Calu3 (cell line): ENCODE measurements at regions of chr2 and their contacts with region 1.

Region 1: GRCh38 chr2:20097879-20098714 is 46.7 kb upstream of the LAPTM4A start:
- DNase-seq: peak; percentile 81
- H3K4me3 Mint-ChIP-seq: no peak overlapping the region
- H3K27ac Mint-ChIP-seq: no peak overlapping the region
- H3K4me1 Mint-ChIP-seq: peaks cover 8% of the 10 kb centered on the region
- H3K27me3 Mint-ChIP-seq: no peaks in the 10 kb centered on the region
- CTCF ChIP-seq: peak; percentile 70

Region 2: DNA sequence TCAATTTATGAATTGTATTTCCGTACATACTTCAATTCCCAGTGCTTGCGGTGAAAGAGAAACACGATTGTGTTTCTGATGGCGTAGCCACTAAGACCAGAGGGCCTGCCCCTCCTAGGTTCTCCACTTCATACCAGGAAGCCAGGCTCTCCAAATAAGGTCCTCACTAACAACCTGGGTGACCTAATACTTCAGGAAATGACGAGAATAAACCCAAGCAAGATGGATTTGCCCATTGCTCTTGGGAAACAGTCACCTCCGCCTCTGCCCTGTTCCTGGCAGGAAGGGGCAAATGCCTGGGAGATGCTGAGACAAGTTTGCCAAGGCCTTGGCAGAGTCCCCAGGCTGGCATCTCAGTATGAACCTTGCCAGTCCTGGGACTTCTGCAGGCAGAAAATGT is 238.1 kb before region 1 on chr2:
- CTCF ChIA-PET with region 1: no interaction called
- intact Hi-C with region 1: no loop called
- DNase-seq: no peak
- H3K4me3 Mint-ChIP-seq: no peak overlapping the region
- H3K27ac Mint-ChIP-seq: no peak overlapping the region
- H3K4me1 Mint-ChIP-seq: no peaks in the 10 kb centered on the region
- H3K27me3 Mint-ChIP-seq: peaks cover 15% of the 10 kb centered on the region
- CTCF ChIP-seq: no peak

Region 3: DNA sequence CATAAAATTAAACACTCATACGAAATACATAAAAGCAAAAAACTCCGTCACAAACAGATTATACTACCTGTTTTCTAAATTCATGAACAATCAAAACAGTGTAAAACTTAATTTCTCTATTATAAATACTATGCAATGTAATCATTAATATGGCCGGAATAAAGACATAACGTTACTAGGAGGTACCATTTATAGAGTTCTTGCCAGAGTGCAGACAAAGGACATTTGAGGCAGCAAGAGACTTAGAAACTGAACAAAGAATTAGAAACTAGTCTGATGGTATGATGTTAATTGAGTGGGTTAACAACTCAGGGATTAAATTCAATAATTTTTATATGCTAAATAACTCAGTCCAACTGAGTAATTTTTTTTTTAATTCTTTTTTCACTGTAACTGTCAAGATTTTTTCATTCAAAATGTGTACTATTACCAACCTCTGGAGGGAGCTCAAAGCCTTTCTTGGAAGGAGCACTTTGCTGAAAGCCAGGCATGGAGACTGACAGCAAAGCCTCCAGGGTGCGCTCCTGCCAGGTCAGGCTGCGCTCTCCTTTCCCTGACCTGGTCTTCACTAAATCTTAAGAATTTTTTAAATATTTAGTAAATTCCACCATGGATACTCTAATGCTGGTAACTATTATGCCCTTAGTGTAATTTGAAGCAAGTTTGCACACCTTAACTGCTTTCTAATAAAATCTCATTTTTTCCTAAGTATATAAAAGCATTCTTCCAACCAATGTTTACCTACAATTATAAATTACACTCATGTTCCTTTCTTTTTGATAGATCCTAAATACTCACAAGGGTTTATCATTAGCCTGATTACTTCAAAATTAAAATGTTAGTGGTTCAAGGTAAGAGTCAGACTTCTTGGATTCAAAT is 142.3 kb before region 1 on chr2:
- CTCF ChIA-PET with region 1: interaction called, 15 read pairs
- intact Hi-C with region 1: loop called (anchors 1 kb)
- DNase-seq: peak; percentile 74
- H3K4me3 Mint-ChIP-seq: no peak overlapping the region
- H3K27ac Mint-ChIP-seq: no peak overlapping the region
- H3K4me1 Mint-ChIP-seq: no peaks in the 10 kb centered on the region
- H3K27me3 Mint-ChIP-seq: no peaks in the 10 kb centered on the region
- CTCF ChIP-seq: peak; percentile 81

Region 4: GRCh38 chr2:20015472-20016083 is 82.5 kb before region 1 on chr2:
- CTCF ChIA-PET with region 1: interaction called, 37 read pairs
- intact Hi-C with region 1: loop called (anchors 1 kb)
- DNase-seq: peak; percentile 47
- H3K4me3 Mint-ChIP-seq: no peak overlapping the region
- H3K27ac Mint-ChIP-seq: no peak overlapping the region
- H3K4me1 Mint-ChIP-seq: no peaks in the 10 kb centered on the region
- H3K27me3 Mint-ChIP-seq: peaks cover 7% of the 10 kb centered on the region
- CTCF ChIP-seq: peak; percentile 33

Region 5: DNA sequence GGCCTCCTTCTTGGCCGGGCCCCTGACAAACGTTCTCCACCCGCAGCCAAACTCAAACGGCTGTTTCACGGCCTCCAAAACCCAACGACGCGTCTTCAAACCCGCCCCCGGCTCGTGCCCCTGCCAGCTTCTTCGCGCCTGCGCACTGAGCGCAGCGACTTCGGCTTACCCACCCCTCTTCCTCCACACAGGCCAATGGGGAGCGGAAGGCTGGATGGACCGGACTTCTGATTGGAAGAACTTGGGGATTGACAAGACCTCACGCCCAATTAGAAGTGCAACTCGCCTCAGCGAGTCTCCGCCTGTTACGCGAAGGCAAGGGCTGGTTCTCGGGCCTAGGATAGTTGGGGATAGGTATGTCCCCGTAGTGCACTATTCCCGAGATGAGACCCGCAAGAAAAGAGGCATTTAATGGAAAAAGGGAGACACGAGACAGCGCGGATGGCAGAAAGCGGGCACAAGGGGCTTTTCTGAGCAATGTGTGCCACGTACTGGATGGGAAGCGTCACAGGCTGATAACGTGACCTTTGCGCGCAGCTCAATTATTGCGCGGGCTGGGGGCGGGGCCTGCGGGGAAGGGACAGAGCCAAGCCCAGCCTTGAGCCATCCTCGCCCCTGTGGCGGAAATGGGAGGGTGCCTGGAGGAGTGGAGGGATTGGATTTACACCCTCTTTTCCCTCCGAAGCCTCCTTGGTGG is 46.4 kb before region 1 on chr2 and contains the start of gene LAPTM4A:
- CTCF ChIA-PET with region 1: interaction called, 4 read pairs
- intact Hi-C with region 1: loop called (anchors 1 kb)
- DNase-seq: peak; percentile 96
- H3K4me3 Mint-ChIP-seq: no peak within 1 kb of the TSS
- H3K27ac Mint-ChIP-seq: no peak within 1 kb of the TSS
- H3K4me1 Mint-ChIP-seq: peaks cover 39% of the 10 kb centered on the region
- H3K27me3 Mint-ChIP-seq: no peaks in the 10 kb centered on the region
- CTCF ChIP-seq: no peak
- total RNA-seq, gene LAPTM4A: 129 and 131 TPM in 2 replicates